Right ventricle myocardium inferior (tissue), 1 donor: ENCODE measurements at regions of chr18 and their contacts with region 1.

Region 1: GRCh38 chr18:32470713-32471633 is at the start of gene GAREM1:
- DNase-seq: peak; percentile 96
- ATAC-seq: peak; percentile 98
- total RNA-seq, gene GAREM1: 22.7 TPM

Region 2: GRCh38 chr18:32092422-32093101 is 378.4 kb before region 1 on chr18:
- intact Hi-C with region 1: loop called (anchors 10 kb)
- DNase-seq: peak; percentile 99
- ATAC-seq: peak; percentile 99

Region 3: GRCh38 chr18:32158108-32158624 is 312.8 kb before region 1 on chr18:
- intact Hi-C with region 1: loop called (anchors 5 kb)
- DNase-seq: peak; percentile 78
- ATAC-seq: peak; percentile 95

Region 4: GRCh38 chr18:32271672-32272208 is 199.2 kb before region 1 on chr18:
- intact Hi-C with region 1: loop called (anchors 2 kb)
- DNase-seq: no peak
- ATAC-seq: peak; percentile 67

Region 5: GRCh38 chr18:32289483-32290075 is 181.4 kb before region 1 on chr18:
- intact Hi-C with region 1: loop called (anchors 5 kb)
- DNase-seq: no peak
- ATAC-seq: no peak

Region 6: DNA sequence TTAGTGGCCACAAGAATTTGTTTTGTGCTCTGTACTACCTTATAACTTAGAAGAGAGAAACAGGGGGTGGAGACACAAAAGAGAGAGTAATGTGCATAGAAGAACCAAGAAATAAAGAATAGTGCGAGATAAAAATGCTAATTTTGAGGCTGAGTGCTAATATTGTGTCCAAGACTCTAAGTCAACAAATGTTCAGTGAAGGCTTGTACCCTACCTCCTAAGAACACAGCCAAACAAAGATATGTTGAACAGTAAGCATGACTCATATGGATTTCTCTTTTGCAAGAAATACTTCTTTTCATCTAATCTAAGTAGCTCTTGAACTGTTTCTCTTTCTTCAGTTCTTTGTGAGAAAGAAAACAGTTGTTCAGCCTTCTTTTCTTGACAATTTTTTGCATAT is 45.5 kb before region 1 on chr18:
- intact Hi-C with region 1: loop called (anchors 2 kb)
- DNase-seq: no peak
- ATAC-seq: peak; percentile 29

Region 7: GRCh38 chr18:32552421-32553030 is 81.6 kb after region 1 on chr18:
- intact Hi-C with region 1: loop called (anchors 10 kb)
- DNase-seq: no peak
- ATAC-seq: peak; percentile 68

Region 8: DNA sequence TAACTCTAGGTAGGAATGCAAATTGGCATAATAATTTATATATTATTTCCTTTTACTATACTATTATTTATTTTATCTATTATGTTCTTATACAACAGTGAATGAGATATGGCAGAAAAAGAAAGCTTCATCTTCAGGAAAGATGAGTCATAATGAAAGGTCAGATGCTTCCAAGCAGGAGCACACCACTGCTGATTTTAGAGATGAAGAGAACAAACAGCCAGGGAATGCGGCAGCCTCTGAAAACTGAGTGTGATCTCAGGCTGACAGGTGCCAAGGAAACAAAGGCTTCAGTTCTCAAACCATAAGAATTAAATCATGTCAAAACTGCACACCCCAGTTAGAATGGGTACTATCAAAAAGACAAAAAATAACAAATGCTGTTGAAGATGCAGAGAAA is 820.6 kb after region 1 on chr18:
- intact Hi-C with region 1: no loop called
- DNase-seq: no peak
- ATAC-seq: no peak